GM12878 (cell line): ENCODE measurements at regions of chr7 and their contacts with region 1.

Region 1: GRCh38 chr7:43700059-43700501 is 29.2 kb downstream of the COA1 start:
- DNase-seq: no peak
- ATAC-seq: peak; percentile 66
- H3K4me3 ChIP-seq: no peak overlapping the region
- H3K27ac ChIP-seq: no peak overlapping the region
- H3K4me1 ChIP-seq: peaks cover 43% of the 10 kb centered on the region
- H3K27me3 ChIP-seq: no peaks in the 10 kb centered on the region
- CTCF ChIP-seq: peak; percentile 40 to 77 (median 50); a peak in 5 of 6 replicates
- EP300 ChIP-seq: no peak
- POLR2A ChIP-seq: no peak
- RAD21 ChIP-seq: peak; percentile 96

Region 2: GRCh38 chr7:43590862-43591550 is 109.1 kb before region 1 on chr7:
- CTCF ChIA-PET with region 1: interaction called, 96 read pairs
- POLR2A ChIA-PET with region 1: interaction called, 18 read pairs
- RAD21 ChIA-PET with region 1: interaction called, 516 read pairs
- SMC1A ChIA-PET with region 1: interaction called, 144 read pairs
- in situ Hi-C with region 1: loop called (anchors 10 kb)
- intact Hi-C with region 1: no loop called
- DNase-seq: peak; percentile 87
- ATAC-seq: peak; percentile 65
- H3K4me3 ChIP-seq: peak overlapping the region; percentile 71
- H3K27ac ChIP-seq: peak overlapping the region; percentile 98
- H3K4me1 ChIP-seq: peaks cover 42% of the 10 kb centered on the region
- H3K27me3 ChIP-seq: no peaks in the 10 kb centered on the region
- CTCF ChIP-seq: no peak
- EP300 ChIP-seq: peak; percentile 87 to 99
- POLR2A ChIP-seq: no peak; the same call in 1 of the 2 replicates
- RAD21 ChIP-seq: 0 out of 2 replicates have a peak, but pooled peaks have one; percentile 13

Region 3: GRCh38 chr7:43625453-43625852 is 74.6 kb before region 1 on chr7:
- CTCF ChIA-PET with region 1: interaction called, 17 read pairs
- POLR2A ChIA-PET with region 1: no interaction called
- RAD21 ChIA-PET with region 1: interaction called, 27 read pairs
- SMC1A ChIA-PET with region 1: interaction called, 19 read pairs
- in situ Hi-C with region 1: no loop called
- intact Hi-C with region 1: loop called (anchors 5 kb)
- DNase-seq: no peak
- ATAC-seq: peak; percentile 88
- H3K4me3 ChIP-seq: no peak overlapping the region
- H3K27ac ChIP-seq: peak overlapping the region; percentile 25; the same call in 1 of the 2 replicates
- H3K4me1 ChIP-seq: peaks cover 28% of the 10 kb centered on the region
- H3K27me3 ChIP-seq: no peaks in the 10 kb centered on the region
- CTCF ChIP-seq: no peak
- EP300 ChIP-seq: peak; percentile 8 to 67; a peak in 3 of 4 replicates
- POLR2A ChIP-seq: no peak
- RAD21 ChIP-seq: no peak

Region 4: GRCh38 chr7:43647673-43648472 is 52.2 kb before region 1 on chr7:
- CTCF ChIA-PET with region 1: interaction called, 132 read pairs
- POLR2A ChIA-PET with region 1: interaction called, 62 read pairs
- RAD21 ChIA-PET with region 1: interaction called, 132 read pairs
- SMC1A ChIA-PET with region 1: interaction called, 177 read pairs
- in situ Hi-C with region 1: no loop called
- intact Hi-C with region 1: loop called (anchors 1 kb)
- DNase-seq: peak; percentile 85
- ATAC-seq: peak; percentile 55
- H3K4me3 ChIP-seq: peak overlapping the region; percentile 58
- H3K27ac ChIP-seq: peak overlapping the region; percentile 99
- H3K4me1 ChIP-seq: peaks cover 68% of the 10 kb centered on the region
- H3K27me3 ChIP-seq: no peaks in the 10 kb centered on the region
- CTCF ChIP-seq: no peak
- EP300 ChIP-seq: peak in 1 of 2 experiments; percentile 40; a peak in 2 of 4 replicates
- POLR2A ChIP-seq: peak; percentile 48
- RAD21 ChIP-seq: no peak

Region 5: DNA sequence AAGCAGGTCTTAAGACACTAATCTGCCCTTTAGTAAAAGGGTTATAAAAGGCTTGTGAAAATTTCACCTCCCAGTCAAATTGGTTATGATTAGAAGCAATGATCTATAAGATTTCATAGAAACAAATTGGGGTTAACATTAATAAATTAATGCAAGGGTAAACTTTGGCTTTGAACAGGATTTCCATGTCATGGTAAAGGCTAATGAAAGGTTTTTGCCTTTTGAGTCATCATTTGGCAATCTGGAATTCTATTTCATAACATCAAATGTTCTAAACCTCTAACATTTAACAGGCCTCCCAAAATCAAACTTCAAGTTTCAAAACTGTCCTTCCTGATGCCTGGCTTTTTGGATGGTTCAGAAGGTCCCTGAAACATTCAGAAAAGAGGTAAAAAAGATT is 33.1 kb before region 1 on chr7:
- CTCF ChIA-PET with region 1: interaction called, 4 read pairs
- POLR2A ChIA-PET with region 1: no interaction called
- RAD21 ChIA-PET with region 1: interaction called, 3 read pairs
- SMC1A ChIA-PET with region 1: interaction called, 17 read pairs
- in situ Hi-C with region 1: no loop called
- intact Hi-C with region 1: no loop called
- DNase-seq: no peak
- ATAC-seq: no peak
- H3K4me3 ChIP-seq: no peak overlapping the region
- H3K27ac ChIP-seq: no peak overlapping the region
- H3K4me1 ChIP-seq: peaks cover 11% of the 10 kb centered on the region; the same call in 1 of the 2 replicates
- H3K27me3 ChIP-seq: no peaks in the 10 kb centered on the region
- CTCF ChIP-seq: no peak
- EP300 ChIP-seq: no peak
- POLR2A ChIP-seq: no peak
- RAD21 ChIP-seq: no peak

Region 6: GRCh38 chr7:43729214-43729923 is 29.3 kb after region 1 on chr7 and contains the start of gene COA1:
- CTCF ChIA-PET with region 1: interaction called, 15 read pairs
- POLR2A ChIA-PET with region 1: interaction called, 3 read pairs
- RAD21 ChIA-PET with region 1: interaction called, 10 read pairs
- SMC1A ChIA-PET with region 1: interaction called, 14 read pairs
- in situ Hi-C with region 1: no loop called
- intact Hi-C with region 1: no loop called
- DNase-seq: peak; percentile 68
- ATAC-seq: peak; percentile 85
- H3K4me3 ChIP-seq: peak within 1 kb of the TSS; percentile 79
- H3K27ac ChIP-seq: peak within 1 kb of the TSS; percentile 74
- H3K4me1 ChIP-seq: peaks cover 13% of the 10 kb centered on the region
- H3K27me3 ChIP-seq: no peaks in the 10 kb centered on the region
- CTCF ChIP-seq: peak in 2 of 3 experiments; percentile 8 to 24; a peak in 1 of 6 replicates
- EP300 ChIP-seq: no peak
- POLR2A ChIP-seq: peak; percentile 86
- RAD21 ChIP-seq: no peak
- polyA plus RNA-seq, gene COA1: 218 to 258 TPM

Region 7: DNA sequence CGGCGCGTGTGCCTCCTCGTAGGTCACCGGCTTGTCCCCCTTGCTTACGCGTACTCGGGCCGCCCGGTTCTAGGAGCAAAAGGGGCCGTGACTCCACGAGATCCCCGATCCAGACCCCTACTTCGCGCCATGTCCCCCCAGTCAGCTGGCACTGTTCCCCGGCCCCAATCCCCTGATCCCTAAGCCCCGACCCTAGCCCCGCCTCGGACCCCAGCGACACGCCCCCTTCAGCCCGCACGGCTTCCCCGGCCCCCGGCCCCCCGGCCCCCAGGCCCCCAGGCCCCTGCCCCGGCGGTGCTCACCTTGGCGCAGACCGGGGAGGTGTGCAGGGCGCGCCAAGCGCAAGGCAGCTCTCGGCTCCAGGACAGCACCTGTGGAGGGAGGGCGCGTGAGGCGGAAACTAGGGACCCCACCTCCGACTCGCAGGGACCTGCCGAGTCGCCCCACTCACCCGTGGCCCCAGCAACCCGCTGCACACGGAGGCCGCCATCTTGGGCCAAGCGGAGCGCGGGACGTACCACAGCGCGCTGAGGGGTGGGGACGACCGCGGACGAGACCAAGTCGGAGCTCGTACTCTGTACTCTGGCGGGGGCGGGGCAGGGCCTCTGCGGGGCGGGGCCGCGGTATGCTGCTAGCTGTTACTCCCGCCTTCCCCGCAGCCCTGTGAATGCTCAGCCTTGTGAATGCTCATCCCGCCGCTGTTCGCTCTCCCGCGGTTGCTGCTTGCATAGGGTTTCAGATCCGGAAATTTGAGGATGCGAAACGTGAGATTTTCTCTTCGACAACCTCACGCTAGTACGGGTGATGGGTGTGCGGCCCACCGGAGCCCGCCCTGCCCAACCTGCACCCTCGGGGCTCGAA is 169.2 kb after region 1 on chr7 and contains the start of gene MRPS24:
- CTCF ChIA-PET with region 1: no interaction called
- POLR2A ChIA-PET with region 1: no interaction called
- RAD21 ChIA-PET with region 1: no interaction called
- SMC1A ChIA-PET with region 1: no interaction called
- in situ Hi-C with region 1: no loop called
- intact Hi-C with region 1: no loop called
- DNase-seq: peak; percentile 70
- ATAC-seq: peak; percentile 98
- H3K4me3 ChIP-seq: peak within 1 kb of the TSS; percentile 92
- H3K27ac ChIP-seq: peak within 1 kb of the TSS; percentile 52
- H3K4me1 ChIP-seq: peaks cover 7% of the 10 kb centered on the region
- H3K27me3 ChIP-seq: no peaks in the 10 kb centered on the region
- CTCF ChIP-seq: no peak
- EP300 ChIP-seq: no peak
- POLR2A ChIP-seq: peak; percentile 98
- RAD21 ChIP-seq: no peak
- polyA plus RNA-seq, gene MRPS24: 27.6 to 97.4 TPM

Region 8: GRCh38 chr7:44693721-44694285 is 993.7 kb after region 1 on chr7:
- CTCF ChIA-PET with region 1: no interaction called
- POLR2A ChIA-PET with region 1: no interaction called
- RAD21 ChIA-PET with region 1: no interaction called
- SMC1A ChIA-PET with region 1: no interaction called
- in situ Hi-C with region 1: no loop called
- intact Hi-C with region 1: no loop called
- DNase-seq: no peak
- ATAC-seq: no peak
- H3K4me3 ChIP-seq: no peak overlapping the region
- H3K27ac ChIP-seq: no peak overlapping the region
- H3K4me1 ChIP-seq: no peaks in the 10 kb centered on the region
- H3K27me3 ChIP-seq: no peaks in the 10 kb centered on the region
- CTCF ChIP-seq: no peak
- EP300 ChIP-seq: no peak
- POLR2A ChIP-seq: no peak
- RAD21 ChIP-seq: no peak